ENCODE measurements at regions of chr14 and their contacts with region 1.

Region 1: DNA sequence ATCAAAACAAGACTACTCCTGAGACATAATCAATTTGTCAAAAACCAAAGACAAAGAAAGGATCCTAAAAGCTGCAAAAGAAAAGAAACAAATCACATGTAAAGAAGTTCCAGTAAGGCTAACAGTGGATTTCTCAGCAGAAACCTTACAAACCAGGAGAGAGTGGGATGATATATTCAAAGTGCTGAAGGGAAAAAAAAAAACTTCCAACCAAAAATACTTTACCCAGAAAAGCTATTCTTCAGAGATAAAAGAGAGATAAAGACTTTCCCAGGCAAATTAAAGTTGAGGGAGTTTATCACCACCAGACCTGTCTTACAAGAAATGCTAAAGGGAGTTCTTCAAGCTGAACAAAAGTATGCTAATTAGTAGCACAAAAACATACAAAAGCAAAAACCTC is 91.9 kb upstream of the PPP2R5C start:
- DNase-seq: no peak
- H3K4me3 ChIP-seq: no peak overlapping the region
- CTCF ChIP-seq: no peak
- POLR2A ChIP-seq: no peak

Region 2: DNA sequence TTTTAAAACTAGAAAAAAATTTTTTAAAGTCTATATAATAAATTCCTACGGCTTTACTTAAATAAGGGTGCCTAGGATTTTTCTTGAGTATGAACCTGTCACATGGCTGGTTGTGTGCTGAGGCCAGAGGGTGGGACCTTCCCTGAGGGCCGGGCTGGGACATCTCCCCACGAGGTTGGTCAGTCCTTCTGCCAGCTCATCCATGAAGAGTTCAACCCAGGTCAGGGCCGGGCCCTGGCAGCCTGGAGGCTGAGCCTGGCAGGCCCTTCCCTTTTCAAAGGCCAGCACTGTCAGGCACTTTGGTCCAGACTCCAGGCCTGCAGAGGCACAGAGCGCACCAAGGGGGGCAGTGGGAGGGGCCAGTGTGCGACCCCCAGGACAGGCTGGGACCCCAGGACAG is 1485.4 kb after region 1 on chr14:
- intact Hi-C with region 1: loop called (anchors 5 kb)
- DNase-seq: peak; percentile 80 to 95
- H3K4me3 ChIP-seq: no peak overlapping the region
- CTCF ChIP-seq: no peak
- POLR2A ChIP-seq: no peak